ENCODE measurements at regions of chr16 and their contacts with region 1.

Region 1: GRCh38 chr16:31868691-31869167 is 4.9 kb upstream of the ZNF267 start:
- DNase-seq: peak; percentile 86
- H3K4me3 Mint-ChIP-seq: no peak overlapping the region
- H3K27ac Mint-ChIP-seq: no peak overlapping the region
- H3K4me1 Mint-ChIP-seq: peaks cover 9% of the 10 kb centered on the region
- H3K27me3 Mint-ChIP-seq: peaks cover 34% of the 10 kb centered on the region
- CTCF ChIP-seq: peak; percentile 73

Region 2: GRCh38 chr16:30957456-30958174 is 911.1 kb before region 1 on chr16 and contains the start of gene SETD1A:
- CTCF ChIA-PET with region 1: no interaction called
- intact Hi-C with region 1: loop called (anchors 10 kb)
- DNase-seq: peak; percentile 98
- H3K4me3 Mint-ChIP-seq: peak within 1 kb of the TSS; percentile 87
- H3K27ac Mint-ChIP-seq: peak within 1 kb of the TSS; percentile 97
- H3K4me1 Mint-ChIP-seq: peaks cover 28% of the 10 kb centered on the region
- H3K27me3 Mint-ChIP-seq: no peaks in the 10 kb centered on the region
- CTCF ChIP-seq: no peak
- total RNA-seq, gene SETD1A: 28.8 and 30.5 TPM in 2 replicates

Region 3: GRCh38 chr16:31451681-31452351 is 416.9 kb before region 1 on chr16:
- CTCF ChIA-PET with region 1: interaction called, 6 read pairs
- intact Hi-C with region 1: loop called (anchors 5 kb)
- DNase-seq: peak; percentile 83
- H3K4me3 Mint-ChIP-seq: no peak overlapping the region
- H3K27ac Mint-ChIP-seq: peak overlapping the region; percentile 10
- H3K4me1 Mint-ChIP-seq: peaks cover 21% of the 10 kb centered on the region
- H3K27me3 Mint-ChIP-seq: no peaks in the 10 kb centered on the region
- CTCF ChIP-seq: peak; percentile 81

Region 4: DNA sequence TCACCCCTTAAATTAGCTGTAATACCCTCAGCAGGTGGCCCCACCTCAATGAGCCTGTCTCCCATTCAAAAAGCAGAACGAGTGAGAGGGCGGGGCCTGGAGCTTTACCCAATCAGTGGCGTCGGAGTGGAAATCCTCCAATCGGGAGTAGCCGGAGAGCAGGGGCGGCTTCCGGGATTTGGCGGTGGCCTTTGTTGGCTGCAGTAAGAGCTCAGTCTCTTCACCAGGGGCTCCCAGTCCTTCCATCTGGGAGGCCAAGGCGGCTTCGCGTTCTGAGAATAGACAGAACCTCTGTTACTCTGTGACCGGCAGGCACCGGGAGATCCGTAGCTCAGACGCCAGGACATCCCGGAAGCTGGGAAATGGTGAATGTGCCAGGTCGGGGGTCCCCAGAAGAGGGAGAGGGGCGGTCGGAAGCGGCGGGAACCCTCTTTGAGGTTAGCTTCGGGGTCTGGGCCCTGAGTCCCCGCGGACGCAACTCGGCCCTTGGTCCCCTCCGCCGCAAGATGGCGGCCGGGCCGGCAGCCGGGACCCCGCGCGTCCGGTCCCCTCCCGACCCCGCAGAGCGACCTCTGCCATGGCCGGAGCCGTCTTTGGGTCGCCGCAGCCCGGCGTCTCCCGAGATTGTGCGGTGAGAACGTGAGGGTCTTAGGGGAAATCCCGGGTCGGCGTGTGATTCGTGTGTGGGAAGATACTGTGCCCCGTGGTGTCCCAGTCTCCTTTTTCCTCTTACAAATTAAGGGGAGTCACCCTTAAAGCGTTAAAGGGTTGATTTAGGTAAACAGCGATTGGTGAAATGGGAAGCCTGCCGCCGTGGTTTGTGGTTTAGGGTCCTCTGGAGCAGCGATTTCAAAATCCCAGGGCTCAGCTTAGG is 155.4 kb before region 1 on chr16:
- CTCF ChIA-PET with region 1: no interaction called
- intact Hi-C with region 1: loop called (anchors 5 kb)
- DNase-seq: peak; percentile 94
- H3K4me3 Mint-ChIP-seq: peak overlapping the region; percentile 93
- H3K27ac Mint-ChIP-seq: peak overlapping the region; percentile 97
- H3K4me1 Mint-ChIP-seq: peaks cover 14% of the 10 kb centered on the region
- H3K27me3 Mint-ChIP-seq: no peaks in the 10 kb centered on the region
- CTCF ChIP-seq: no peak

Region 5: DNA sequence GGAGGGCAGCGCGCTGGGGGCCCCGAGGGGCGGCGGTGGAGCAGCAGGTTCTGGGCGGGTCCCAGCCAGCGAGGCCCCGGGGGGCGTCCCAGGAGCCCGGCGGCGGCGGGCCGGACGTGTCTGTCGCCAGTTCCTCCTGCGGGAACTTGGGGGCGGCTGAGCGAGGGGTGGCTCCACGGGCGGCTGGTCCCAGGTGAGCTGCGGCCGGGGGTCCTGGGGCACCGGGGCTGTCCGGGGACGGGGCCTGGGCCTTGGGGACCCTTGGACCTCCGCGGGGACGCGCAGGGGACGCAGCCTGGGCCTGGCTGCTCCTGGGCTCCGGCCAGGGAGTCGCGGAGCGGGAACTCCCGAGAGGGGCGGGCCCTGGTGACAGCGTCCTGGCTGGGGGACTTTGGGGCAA is 49.3 kb before region 1 on chr16:
- CTCF ChIA-PET with region 1: no interaction called
- intact Hi-C with region 1: no loop called
- DNase-seq: no peak
- H3K4me3 Mint-ChIP-seq: no peak overlapping the region
- H3K27ac Mint-ChIP-seq: no peak overlapping the region
- H3K4me1 Mint-ChIP-seq: no peaks in the 10 kb centered on the region
- H3K27me3 Mint-ChIP-seq: no peaks in the 10 kb centered on the region
- CTCF ChIP-seq: no peak

Region 6: GRCh38 chr16:31888735-31889134 is 20.0 kb after region 1 on chr16:
- CTCF ChIA-PET with region 1: no interaction called
- intact Hi-C with region 1: no loop called
- DNase-seq: no peak
- H3K4me3 Mint-ChIP-seq: no peak overlapping the region
- H3K27ac Mint-ChIP-seq: no peak overlapping the region
- H3K4me1 Mint-ChIP-seq: no peaks in the 10 kb centered on the region
- H3K27me3 Mint-ChIP-seq: no peaks in the 10 kb centered on the region
- CTCF ChIP-seq: no peak